Dorsolateral prefrontal cortex (tissue), 120 donors: ENCODE measurements at regions of chr18 and their contacts with region 1.

Region 1: DNA sequence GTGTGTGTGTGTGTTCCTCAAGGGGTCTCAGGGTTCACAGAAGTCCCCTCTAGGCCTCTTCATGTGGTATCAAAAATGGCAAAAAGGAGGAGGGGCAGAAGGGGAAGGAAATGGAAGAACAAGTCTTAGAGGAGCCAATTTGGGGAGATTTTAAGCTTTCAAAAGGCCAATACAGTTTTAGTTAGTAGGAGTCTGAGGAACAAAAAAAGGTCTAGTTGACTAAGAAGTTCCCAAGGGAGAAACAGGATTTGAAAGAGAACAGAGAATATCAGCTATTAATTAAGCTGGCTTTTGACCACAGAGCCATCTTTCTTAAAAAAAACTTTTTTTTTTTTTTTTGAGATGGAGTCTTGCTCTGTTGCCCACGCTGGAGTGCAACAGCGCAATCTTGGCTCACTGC is 7.1 kb downstream of the RNF125 start:
- DNase-seq: no peak
- H3K4me3 ChIP-seq: no peak overlapping the region
- H3K27ac ChIP-seq: no peak overlapping the region
- H3K27me3 ChIP-seq: no peaks in the 10 kb centered on the region
- CTCF ChIP-seq: no peak

Region 2: GRCh38 chr18:31774477-31774785 is 251.3 kb before region 1 on chr18:
- intact Hi-C with region 1: no loop called
- DNase-seq: no peak
- H3K4me3 ChIP-seq: no peak overlapping the region
- H3K27ac ChIP-seq: no peak overlapping the region
- H3K27me3 ChIP-seq: no peaks in the 10 kb centered on the region
- CTCF ChIP-seq: no peak

Region 3: GRCh38 chr18:32057624-32058165 is 32.0 kb after region 1 on chr18:
- intact Hi-C with region 1: loop called in 1 of 2 experiments (anchors 2 kb)
- DNase-seq: peak in 1 of 10 donors; percentile 4
- H3K4me3 ChIP-seq: no peak overlapping the region
- H3K27ac ChIP-seq: no peak overlapping the region
- H3K27me3 ChIP-seq: no peaks in the 10 kb centered on the region
- CTCF ChIP-seq: no peak